ENCODE measurements at regions of chr18 and their contacts with region 1.

Region 1: DNA sequence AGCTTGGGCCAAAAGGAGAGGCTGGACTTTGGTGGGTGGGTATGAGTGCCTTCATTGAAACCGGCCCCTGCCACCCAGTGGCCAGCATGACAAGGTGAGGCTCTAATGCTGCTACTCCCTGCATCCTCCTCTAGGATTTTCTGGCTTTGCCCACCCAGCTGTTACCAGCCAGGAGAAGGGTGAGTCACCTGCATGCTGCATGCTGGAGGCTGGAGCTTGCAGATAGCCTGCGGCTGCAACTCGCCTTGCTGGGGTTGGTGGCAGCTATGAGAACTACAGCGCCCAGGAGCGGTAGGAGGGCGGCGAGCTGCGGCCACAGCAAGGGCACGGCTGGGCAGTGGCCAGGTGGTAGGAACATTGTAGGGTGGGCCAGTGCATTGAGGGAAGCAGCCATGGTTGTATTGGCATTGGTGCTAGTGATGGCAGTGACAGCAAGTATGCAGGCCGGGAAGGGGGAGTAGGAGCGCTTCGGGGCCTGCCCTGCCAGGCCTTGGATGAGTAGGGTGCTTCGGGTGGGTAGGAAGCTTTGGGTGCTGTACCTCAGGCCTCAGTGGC is 75.4 kb upstream of the SLC35G4 start:
- DNase-seq: no peak
- H3K4me3 ChIP-seq: no peak overlapping the region
- H3K27ac ChIP-seq: no peak overlapping the region
- H3K4me1 ChIP-seq: no peaks in the 10 kb centered on the region
- H3K27me3 ChIP-seq: peaks cover 22% of the 10 kb centered on the region
- CTCF ChIP-seq: no peak

Region 2: GRCh38 chr18:11470941-11471340 is 63.1 kb before region 1 on chr18:
- CTCF ChIA-PET with region 1: no interaction called
- POLR2A ChIA-PET with region 1: no interaction called
- intact Hi-C with region 1: loop called (anchors 10 kb)
- DNase-seq: no peak
- H3K4me3 ChIP-seq: no peak overlapping the region
- H3K27ac ChIP-seq: no peak overlapping the region
- H3K4me1 ChIP-seq: no peaks in the 10 kb centered on the region
- H3K27me3 ChIP-seq: no peaks in the 10 kb centered on the region
- CTCF ChIP-seq: no peak

Region 3: GRCh38 chr18:11497585-11497984 is 36.4 kb before region 1 on chr18:
- CTCF ChIA-PET with region 1: no interaction called
- POLR2A ChIA-PET with region 1: no interaction called
- intact Hi-C with region 1: loop called (anchors 5 kb)
- DNase-seq: no peak
- H3K4me3 ChIP-seq: no peak overlapping the region
- H3K27ac ChIP-seq: no peak overlapping the region
- H3K4me1 ChIP-seq: no peaks in the 10 kb centered on the region
- H3K27me3 ChIP-seq: peaks cover 21% of the 10 kb centered on the region
- CTCF ChIP-seq: no peak

Region 4: GRCh38 chr18:12113999-12114646 is 580.1 kb after region 1 on chr18:
- CTCF ChIA-PET with region 1: no interaction called
- POLR2A ChIA-PET with region 1: no interaction called
- intact Hi-C with region 1: no loop called
- DNase-seq: no peak
- H3K4me3 ChIP-seq: no peak overlapping the region
- H3K27ac ChIP-seq: no peak overlapping the region
- H3K4me1 ChIP-seq: no peaks in the 10 kb centered on the region
- H3K27me3 ChIP-seq: no peaks in the 10 kb centered on the region
- CTCF ChIP-seq: no peak

Measured in A673 (cell line).